HEK293T (cell line): ENCODE measurements at regions of chr6 and their contacts with region 1.

Region 1: GRCh38 chr6:43263314-43264178 is 20.3 kb downstream of the TTBK1 start:
- DNase-seq: peak; percentile 90

Region 2: GRCh38 chr6:43334466-43335095 is 71.0 kb after region 1 on chr6:
- CTCF ChIA-PET with region 1: interaction called, 11 read pairs
- POLR2A ChIA-PET with region 1: no interaction called
- DNase-seq: peak; percentile 64